CD8-positive, alpha-beta T cell (primary cell): ENCODE measurements at regions of chr6 and their contacts with region 1.

Region 1: GRCh38 chr6:53348371-53349208 is at the start of gene ELOVL5:
- DNase-seq: peak; percentile 82 to 99 (median 93)
- ATAC-seq: peak; percentile 76
- H3K4me3 ChIP-seq: peak within 1 kb of the TSS; percentile 83 to 91
- H3K4me3 Mint-ChIP-seq: peak within 1 kb of the TSS; percentile 96
- H3K27ac ChIP-seq: peak within 1 kb of the TSS; percentile 80 to 94
- H3K27ac Mint-ChIP-seq: peak within 1 kb of the TSS; percentile 96
- H3K4me1 ChIP-seq: peaks cover 38% of the 10 kb centered on the region
- H3K4me1 Mint-ChIP-seq: peaks cover 48% of the 10 kb centered on the region
- H3K27me3 ChIP-seq: no peaks in the 10 kb centered on the region
- H3K27me3 Mint-ChIP-seq: no peaks in the 10 kb centered on the region
- CTCF ChIP-seq: no peak
- total RNA-seq, gene ELOVL5: 79.1 to 82.7 TPM

Region 2: DNA sequence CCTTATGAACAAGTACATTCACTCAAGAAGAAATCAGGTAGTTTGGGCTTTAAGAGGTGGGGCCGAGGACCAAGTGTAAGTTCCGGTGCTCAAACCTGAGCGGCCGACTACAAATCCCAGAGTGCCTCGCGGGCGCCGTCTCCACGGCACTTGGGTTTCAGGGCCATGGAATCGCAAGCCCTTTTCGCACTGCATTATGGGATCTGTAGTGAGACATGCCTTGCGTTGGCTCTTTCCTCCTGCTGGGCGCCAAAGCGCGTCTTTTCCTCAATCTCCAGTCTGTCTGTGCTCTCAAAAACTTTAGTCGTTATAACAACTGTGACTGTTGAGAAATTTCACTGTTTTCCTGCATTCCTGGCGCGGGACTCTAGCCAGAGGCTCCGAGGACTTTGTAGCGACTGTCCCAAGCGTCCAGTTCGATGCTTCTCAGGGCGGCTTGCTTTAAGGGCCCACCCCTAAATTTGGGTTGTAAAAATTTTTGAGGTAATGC is 283.8 kb before region 1 on chr6:
- CTCF ChIA-PET with region 1: no interaction called
- POLR2A ChIA-PET with region 1: no interaction called
- intact Hi-C with region 1: loop called in 1 of 2 experiments (anchors 5 kb)
- DNase-seq: peak; percentile 90 to 98 (median 96)
- ATAC-seq: peak; percentile 83
- H3K4me3 ChIP-seq: peak overlapping the region; percentile 79 to 83
- H3K4me3 Mint-ChIP-seq: peak overlapping the region; percentile 100
- H3K27ac ChIP-seq: peak overlapping the region; percentile 55 to 81
- H3K27ac Mint-ChIP-seq: peak overlapping the region; percentile 98
- H3K4me1 ChIP-seq: peaks cover 39% of the 10 kb centered on the region
- H3K4me1 Mint-ChIP-seq: peaks cover 60% of the 10 kb centered on the region
- H3K27me3 ChIP-seq: no peaks in the 10 kb centered on the region
- H3K27me3 Mint-ChIP-seq: no peaks in the 10 kb centered on the region
- CTCF ChIP-seq: no peak

Region 3: GRCh38 chr6:53309059-53309900 is 39.3 kb before region 1 on chr6:
- CTCF ChIA-PET with region 1: interaction called, 6 read pairs
- POLR2A ChIA-PET with region 1: interaction called, 23 read pairs
- intact Hi-C with region 1: no loop called
- DNase-seq: peak in 6 of 9 experiments; percentile 26 to 62 (median 34)
- ATAC-seq: peak; percentile 53
- H3K4me3 ChIP-seq: no peak overlapping the region
- H3K4me3 Mint-ChIP-seq: no peak overlapping the region
- H3K27ac ChIP-seq: peak overlapping the region in 1 of 2 experiments; percentile 38
- H3K27ac Mint-ChIP-seq: peak overlapping the region; percentile 45
- H3K4me1 ChIP-seq: peaks cover 53% of the 10 kb centered on the region
- H3K4me1 Mint-ChIP-seq: peaks cover 81% of the 10 kb centered on the region
- H3K27me3 ChIP-seq: no peaks in the 10 kb centered on the region
- H3K27me3 Mint-ChIP-seq: no peaks in the 10 kb centered on the region
- CTCF ChIP-seq: no peak

Region 4: GRCh38 chr6:53359072-53359842 is 10.7 kb after region 1 on chr6:
- CTCF ChIA-PET with region 1: interaction called, 3 read pairs
- POLR2A ChIA-PET with region 1: interaction called, 36 read pairs
- intact Hi-C with region 1: loop called (anchors 1 kb)
- DNase-seq: peak; percentile 79 to 95 (median 86)
- ATAC-seq: peak; percentile 76
- H3K4me3 ChIP-seq: peak overlapping the region; percentile 67 to 72
- H3K4me3 Mint-ChIP-seq: peak overlapping the region; percentile 88
- H3K27ac ChIP-seq: peak overlapping the region; percentile 83 to 96
- H3K27ac Mint-ChIP-seq: peak overlapping the region; percentile 96
- H3K4me1 ChIP-seq: peaks cover 38% of the 10 kb centered on the region
- H3K4me1 Mint-ChIP-seq: peaks cover 43% of the 10 kb centered on the region
- H3K27me3 ChIP-seq: no peaks in the 10 kb centered on the region
- H3K27me3 Mint-ChIP-seq: no peaks in the 10 kb centered on the region
- CTCF ChIP-seq: no peak

Region 5: GRCh38 chr6:53544470-53545308 is 196.1 kb after region 1 on chr6 and contains the start of gene GCLC:
- CTCF ChIA-PET with region 1: no interaction called
- POLR2A ChIA-PET with region 1: no interaction called
- intact Hi-C with region 1: loop called (anchors 5 kb)
- DNase-seq: peak; percentile 75 to 95 (median 87)
- ATAC-seq: peak; percentile 67
- H3K4me3 ChIP-seq: peak within 1 kb of the TSS; percentile 69 to 79
- H3K4me3 Mint-ChIP-seq: peak within 1 kb of the TSS; percentile 99
- H3K27ac ChIP-seq: peak within 1 kb of the TSS; percentile 48 to 62
- H3K27ac Mint-ChIP-seq: peak within 1 kb of the TSS; percentile 89
- H3K4me1 ChIP-seq: peaks cover 39% of the 10 kb centered on the region
- H3K4me1 Mint-ChIP-seq: peaks cover 68% of the 10 kb centered on the region
- H3K27me3 ChIP-seq: no peaks in the 10 kb centered on the region
- H3K27me3 Mint-ChIP-seq: no peaks in the 10 kb centered on the region
- CTCF ChIP-seq: peak; percentile 80
- total RNA-seq, gene GCLC: 13.1 to 13.6 TPM